OCI-LY7 (cell line): ENCODE measurements at regions of chr3 and their contacts with region 1.

Region 1: DNA sequence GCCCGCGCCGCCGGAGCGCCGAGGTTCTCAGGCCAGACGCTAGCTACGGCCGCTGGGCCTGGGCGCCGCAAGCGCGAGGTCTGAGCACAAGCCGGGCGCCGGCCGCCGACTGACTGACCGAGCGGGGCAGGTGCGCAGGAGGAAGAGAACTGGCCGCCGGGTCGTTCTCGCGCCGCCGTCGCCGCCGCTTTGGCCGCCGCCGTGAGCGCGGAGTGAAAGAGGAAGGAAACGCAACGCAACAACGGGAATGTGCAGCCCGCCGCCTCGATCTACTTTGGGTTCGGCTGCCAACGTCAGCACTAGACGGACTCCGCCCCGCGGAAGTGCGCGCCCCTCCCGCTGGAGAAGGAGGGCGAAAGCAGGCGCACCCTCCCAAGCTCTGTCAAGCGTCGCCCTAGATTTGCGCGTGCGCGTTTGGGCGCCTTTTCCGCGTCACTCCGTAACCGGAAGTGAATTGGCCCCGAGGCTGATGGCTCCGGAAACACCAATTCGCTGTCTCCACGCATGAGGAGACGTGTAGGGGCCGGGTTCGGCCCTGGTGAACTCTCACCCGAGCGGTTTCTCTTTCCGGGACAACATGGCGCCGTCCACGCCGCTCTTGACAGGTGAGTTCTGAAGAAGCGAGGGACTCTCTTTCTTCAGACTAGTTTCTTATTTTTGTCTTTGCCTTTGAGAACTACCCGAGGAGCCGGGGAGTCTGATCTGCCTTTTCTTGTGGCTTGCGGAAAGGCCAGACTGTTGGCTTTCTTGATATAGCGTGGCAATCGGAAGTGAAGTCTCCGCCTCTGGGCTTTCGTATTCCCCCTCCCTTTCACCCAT is at the starts of genes EIF2A and SERP1:
- DNase-seq: peak; percentile 99
- H3K4me3 ChIP-seq: peak within 1 kb of the TSS; percentile 98
- H3K27ac ChIP-seq: peak within 1 kb of the TSS; percentile 81
- H3K4me1 ChIP-seq: peaks cover 40% of the 10 kb centered on the region
- CTCF ChIP-seq: no peak
- total RNA-seq, gene EIF2A: 85.6 and 86.0 TPM in 2 replicates
- total RNA-seq, gene SERP1: 182 and 183 TPM in 2 replicates

Region 2: GRCh38 chr3:150521463-150521862 is 25.0 kb before region 1 on chr3:
- CTCF ChIA-PET with region 1: no interaction called
- POLR2A ChIA-PET with region 1: no interaction called
- intact Hi-C with region 1: no loop called
- DNase-seq: no peak
- H3K4me3 ChIP-seq: no peak overlapping the region
- H3K27ac ChIP-seq: no peak overlapping the region
- H3K4me1 ChIP-seq: no peaks in the 10 kb centered on the region
- CTCF ChIP-seq: 0 out of 2 replicates have a peak, but pooled peaks have one; percentile 17

Region 3: DNA sequence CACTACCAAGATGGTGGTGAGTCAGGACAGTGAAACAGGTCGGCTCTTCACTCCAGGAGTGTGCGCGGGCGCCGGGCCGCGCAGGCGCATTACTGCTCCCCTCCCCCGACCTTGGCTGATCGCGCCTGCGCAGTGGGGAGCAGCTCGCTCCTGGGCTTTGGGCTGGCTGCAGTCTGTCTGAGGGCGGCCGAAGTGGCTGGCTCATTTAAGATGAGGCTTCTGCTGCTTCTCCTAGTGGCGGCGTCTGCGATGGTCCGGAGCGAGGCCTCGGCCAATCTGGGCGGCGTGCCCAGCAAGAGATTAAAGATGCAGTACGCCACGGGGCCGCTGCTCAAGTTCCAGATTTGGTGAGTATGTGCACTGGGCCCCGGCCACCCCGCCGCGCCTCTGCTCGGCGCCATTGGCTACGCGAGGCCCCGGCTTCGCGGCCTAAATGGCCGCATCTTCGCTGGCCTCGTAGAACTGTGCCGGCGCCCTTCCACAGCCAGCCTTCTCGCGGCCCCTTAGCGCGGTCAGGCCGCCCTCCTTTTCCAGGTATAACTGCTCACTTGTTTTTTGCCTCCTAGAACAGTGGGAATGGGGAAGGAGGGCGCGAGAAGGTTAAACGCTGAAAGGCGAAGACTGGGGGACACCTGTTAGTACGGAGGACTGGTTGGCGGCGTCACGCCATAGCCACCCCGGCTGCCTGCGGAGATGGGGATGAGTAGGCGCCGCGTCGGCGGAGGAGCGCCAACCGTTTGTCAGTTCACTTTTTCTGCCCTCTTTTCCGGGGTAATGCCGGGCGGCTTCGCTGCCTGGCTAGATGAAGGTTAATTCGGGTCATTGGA is 56.9 kb after region 1 on chr3 and contains the start of gene SELENOT:
- CTCF ChIA-PET with region 1: no interaction called
- POLR2A ChIA-PET with region 1: interaction called, 14 read pairs
- intact Hi-C with region 1: loop called (anchors 1 kb)
- DNase-seq: peak; percentile 95
- H3K4me3 ChIP-seq: peak within 1 kb of the TSS; percentile 88
- H3K27ac ChIP-seq: peak within 1 kb of the TSS; percentile 93
- H3K4me1 ChIP-seq: peaks cover 54% of the 10 kb centered on the region
- CTCF ChIP-seq: 0 out of 2 replicates have a peak, but pooled peaks have one; percentile 29
- total RNA-seq, gene SELENOT: 36.8 and 60.7 TPM in 2 replicates

Region 4: DNA sequence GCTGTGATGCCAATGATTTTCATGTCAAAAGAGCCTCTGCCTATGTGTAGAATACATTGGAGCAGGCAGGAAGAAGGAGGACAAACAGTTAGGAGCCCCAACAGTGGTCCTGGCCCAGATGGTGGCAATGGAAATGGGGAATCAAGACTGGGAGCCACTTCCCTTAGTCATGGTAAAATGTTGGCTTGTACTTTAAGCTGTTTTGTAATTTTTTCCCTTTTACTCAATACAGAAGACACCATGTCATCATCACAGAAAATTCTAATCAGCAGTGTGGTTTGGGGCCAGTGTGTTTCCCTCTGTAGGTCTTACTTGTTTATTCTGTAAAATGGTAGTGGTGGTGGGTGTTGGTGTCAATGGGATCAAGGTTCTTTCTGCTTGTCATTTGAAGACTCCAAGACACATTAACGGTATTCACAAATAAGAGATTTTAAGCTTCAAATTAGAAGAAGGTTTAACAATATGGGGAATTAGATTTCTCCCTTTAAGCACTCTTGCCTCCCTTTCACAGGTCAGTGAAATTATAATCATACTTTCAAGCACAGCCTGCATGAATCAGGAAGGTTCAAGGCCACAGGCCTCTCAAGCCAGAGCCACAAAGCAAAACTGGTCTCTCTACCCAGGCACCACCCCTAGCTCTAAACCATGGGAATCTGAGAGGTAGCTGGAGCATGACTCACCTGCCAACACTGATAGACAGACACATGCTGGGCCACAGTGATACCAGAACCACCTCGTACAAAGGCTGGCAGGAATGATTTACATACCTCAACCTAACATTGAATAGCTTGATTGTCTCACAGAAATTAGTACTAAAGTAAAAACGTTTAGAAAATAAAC is 191.7 kb after region 1 on chr3:
- CTCF ChIA-PET with region 1: no interaction called
- POLR2A ChIA-PET with region 1: no interaction called
- intact Hi-C with region 1: loop called (anchors 1 kb)
- DNase-seq: no peak
- H3K4me3 ChIP-seq: no peak overlapping the region
- H3K27ac ChIP-seq: no peak overlapping the region
- H3K4me1 ChIP-seq: peaks cover 23% of the 10 kb centered on the region
- CTCF ChIP-seq: no peak